Endothelial cell of umbilical vein (primary cell): ENCODE measurements at regions of chr1 and their contacts with region 1.

Region 1: GRCh38 chr1:19762175-19762779 is 37.4 kb downstream of the TMCO4 start:
- DNase-seq: peak; percentile 50
- H3K4me3 ChIP-seq: no peak overlapping the region
- H3K27ac ChIP-seq: no peak overlapping the region
- H3K4me1 ChIP-seq: peaks cover 20% of the 10 kb centered on the region
- H3K27me3 ChIP-seq: no peaks in the 10 kb centered on the region
- CTCF ChIP-seq: peak; percentile 83 to 86
- POLR2A ChIP-seq: no peak

Region 2: GRCh38 chr1:19750101-19750881 is 12.0 kb before region 1 on chr1:
- CTCF ChIA-PET with region 1: interaction called, 11 read pairs
- POLR2A ChIA-PET with region 1: no interaction called
- dilution Hi-C with region 1: no loop called
- intact Hi-C with region 1: no loop called
- DNase-seq: peak; percentile 24
- H3K4me3 ChIP-seq: no peak overlapping the region
- H3K27ac ChIP-seq: no peak overlapping the region
- H3K4me1 ChIP-seq: peaks cover 2% of the 10 kb centered on the region
- H3K27me3 ChIP-seq: no peaks in the 10 kb centered on the region
- CTCF ChIP-seq: no peak
- POLR2A ChIP-seq: no peak

Region 3: GRCh38 chr1:19799877-19800804 is 37.9 kb after region 1 on chr1 and contains the start of gene TMCO4:
- CTCF ChIA-PET with region 1: interaction called, 8 read pairs
- POLR2A ChIA-PET with region 1: interaction called, 4 read pairs
- dilution Hi-C with region 1: no loop called
- intact Hi-C with region 1: loop called (anchors 1 kb)
- DNase-seq: peak; percentile 60
- H3K4me3 ChIP-seq: peak within 1 kb of the TSS; percentile 40 to 72 (median 69)
- H3K27ac ChIP-seq: peak within 1 kb of the TSS; percentile 15
- H3K4me1 ChIP-seq: peaks cover 9% of the 10 kb centered on the region
- H3K27me3 ChIP-seq: no peaks in the 10 kb centered on the region
- CTCF ChIP-seq: no peak
- POLR2A ChIP-seq: no peak
- total RNA-seq, gene TMCO4: 9.0 and 10.3 TPM in 2 replicates

Region 4: DNA sequence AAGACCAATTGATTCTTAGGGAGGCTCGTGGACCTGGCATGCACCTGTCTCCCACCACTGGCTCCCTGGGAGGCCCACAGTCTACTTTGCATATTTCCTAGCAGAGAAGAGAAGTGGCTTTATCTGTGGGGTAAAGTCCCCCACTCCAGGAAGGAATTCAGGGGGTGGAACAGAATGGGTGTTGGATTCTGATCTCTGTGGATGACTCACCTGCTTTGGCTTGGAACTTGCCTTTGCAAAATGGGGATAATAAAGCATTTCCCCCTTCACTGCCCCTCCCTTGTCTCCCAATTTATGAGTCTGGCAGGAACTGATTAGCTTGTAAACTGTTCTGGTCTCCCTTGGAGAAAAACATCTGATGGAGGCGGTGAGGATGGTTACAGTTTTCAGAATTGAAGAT is 98.8 kb after region 1 on chr1:
- CTCF ChIA-PET with region 1: no interaction called
- POLR2A ChIA-PET with region 1: no interaction called
- dilution Hi-C with region 1: no loop called
- intact Hi-C with region 1: loop called (anchors 1 kb)
- DNase-seq: no peak
- H3K4me3 ChIP-seq: no peak overlapping the region
- H3K27ac ChIP-seq: no peak overlapping the region
- H3K4me1 ChIP-seq: no peaks in the 10 kb centered on the region
- H3K27me3 ChIP-seq: peaks cover 6% of the 10 kb centered on the region in 2 experiments
- CTCF ChIP-seq: no peak
- POLR2A ChIP-seq: no peak